ENCODE measurements at regions of chr12 and their contacts with region 1.

Region 1: GRCh38 chr12:111773801-111774551 is 7.2 kb downstream of the ALDH2 start:
- DNase-seq: peak; percentile 79 to 89
- ATAC-seq: peak; percentile 82 to 89
- H3K4me3 ChIP-seq: peak overlapping the region; percentile 23 to 40 (median 33)
- H3K27ac ChIP-seq: peak overlapping the region; percentile 83 to 85 (median 84)
- H3K4me1 ChIP-seq: peaks cover 48 to 53% of the 10 kb centered on the region in 2 donors
- H3K27me3 ChIP-seq: no peaks in the 10 kb centered on the region
- CTCF ChIP-seq: no peak
- POLR2A ChIP-seq: no peak

Region 2: DNA sequence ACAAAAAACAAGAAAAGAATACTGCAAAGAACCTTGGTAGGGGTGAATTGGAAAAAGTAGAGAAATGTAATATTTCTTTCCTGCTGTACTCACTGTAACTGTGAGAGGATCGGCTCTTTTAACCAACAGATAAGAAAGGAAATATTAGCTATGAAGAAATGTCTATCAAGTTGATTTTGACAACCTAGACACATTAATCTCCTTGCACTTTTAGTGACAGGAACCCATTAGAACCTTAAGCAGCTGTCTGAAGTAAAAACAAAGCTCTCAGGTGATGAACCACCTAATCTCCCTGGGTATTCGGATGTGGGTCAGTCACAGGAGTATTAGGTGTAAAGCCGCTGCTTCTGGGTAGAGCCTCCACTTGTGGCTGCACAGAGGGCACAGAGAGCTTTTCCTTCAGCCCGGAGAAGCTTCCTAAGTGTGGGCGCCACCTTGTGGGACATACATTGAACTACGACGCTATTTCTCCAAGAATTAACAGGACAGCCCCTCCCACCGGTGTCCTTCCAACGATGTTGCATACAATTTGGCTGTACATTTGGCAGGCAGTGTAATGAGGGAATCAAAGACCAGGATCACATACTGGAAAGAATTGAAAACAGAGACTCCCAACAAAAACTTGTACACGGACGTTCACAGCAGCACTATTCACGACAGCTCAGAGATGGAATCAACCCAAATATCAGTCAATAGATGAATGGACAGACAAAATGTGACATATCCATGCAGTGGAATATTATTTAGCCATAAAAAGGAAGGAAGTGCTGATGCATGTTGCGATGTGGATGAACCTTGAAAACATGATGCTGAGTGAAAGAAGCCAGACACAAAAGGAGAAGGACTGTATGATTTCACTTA is 39.1 kb after region 1 on chr12:
- in situ Hi-C with region 1: no loop called
- intact Hi-C with region 1: loop called (anchors 5 kb)
- DNase-seq: peak; percentile 56 to 78
- ATAC-seq: peak; percentile 90 to 99
- H3K4me3 ChIP-seq: no peak overlapping the region
- H3K27ac ChIP-seq: no peak overlapping the region
- H3K4me1 ChIP-seq: no peaks in the 10 kb centered on the region
- H3K27me3 ChIP-seq: no peaks in the 10 kb centered on the region
- CTCF ChIP-seq: peak; percentile 75 to 89 (median 83)
- POLR2A ChIP-seq: no peak